Naive thymus-derived CD4-positive, alpha-beta T cell (primary cell): ENCODE measurements at regions of chr14 and their contacts with region 1.

Region 1: DNA sequence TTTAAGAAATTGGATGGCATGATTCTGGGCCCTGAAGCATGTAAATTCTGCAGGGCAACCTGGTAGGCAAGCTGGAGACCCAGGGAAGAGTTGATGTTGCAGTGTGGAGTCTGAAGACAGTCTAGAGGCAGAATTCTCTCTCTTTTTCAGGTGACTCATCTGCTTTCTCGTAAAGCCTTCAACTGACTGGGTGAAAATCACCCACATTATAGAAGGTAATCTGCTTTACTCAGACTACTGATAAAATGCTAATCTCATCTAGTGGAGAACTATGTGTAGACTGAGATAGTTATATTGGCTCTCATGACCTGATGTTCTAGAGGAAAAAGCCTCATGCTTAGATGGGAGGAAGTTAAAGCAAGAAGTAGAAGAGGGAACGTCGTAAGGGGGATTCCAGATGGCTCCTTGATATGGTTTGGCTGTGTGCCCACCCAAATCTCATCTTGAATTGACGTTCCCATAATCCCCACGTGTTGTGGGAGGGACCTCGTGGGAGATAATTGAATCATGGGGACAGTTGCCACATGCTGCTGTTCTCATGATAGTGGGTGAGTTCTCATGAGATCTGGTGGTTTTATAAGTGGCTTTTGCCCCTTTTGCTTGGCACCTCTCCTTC is 723.8 kb downstream of the BCL11B start:
- DNase-seq: peak in 2 of 9 donors; percentile 4
- ATAC-seq: peak; percentile 31
- H3K4me3 ChIP-seq: no peak overlapping the region
- H3K4me3 Mint-ChIP-seq: peak overlapping the region in 3 of 10 donors; percentile 24 to 42 (median 36)
- H3K27ac ChIP-seq: no peak overlapping the region
- H3K27ac Mint-ChIP-seq: peak overlapping the region in 7 of 9 donors; percentile 13 to 55 (median 29)
- H3K4me1 ChIP-seq: no peaks in the 10 kb centered on the region
- H3K4me1 Mint-ChIP-seq: peaks cover 9 to 33% (median 13%) of the 10 kb centered on the region in 7 donors
- H3K27me3 ChIP-seq: no peaks in the 10 kb centered on the region
- H3K27me3 Mint-ChIP-seq: no peaks in the 10 kb centered on the region

Region 2: GRCh38 chr14:98470663-98471062 is 77.5 kb before region 1 on chr14:
- CTCF ChIA-PET with region 1: no interaction called
- POLR2A ChIA-PET with region 1: no interaction called
- intact Hi-C with region 1: loop called in 1 of 2 experiments (anchors 5 kb)
- DNase-seq: no peak
- ATAC-seq: no peak
- H3K4me3 ChIP-seq: no peak overlapping the region
- H3K4me3 Mint-ChIP-seq: no peak overlapping the region
- H3K27ac ChIP-seq: no peak overlapping the region
- H3K27ac Mint-ChIP-seq: no peak overlapping the region
- H3K4me1 ChIP-seq: no peaks in the 10 kb centered on the region
- H3K4me1 Mint-ChIP-seq: peaks cover 0 to 6% (median 0%) of the 10 kb centered on the region in 7 donors
- H3K27me3 ChIP-seq: no peaks in the 10 kb centered on the region
- H3K27me3 Mint-ChIP-seq: no peaks in the 10 kb centered on the region

Region 3: DNA sequence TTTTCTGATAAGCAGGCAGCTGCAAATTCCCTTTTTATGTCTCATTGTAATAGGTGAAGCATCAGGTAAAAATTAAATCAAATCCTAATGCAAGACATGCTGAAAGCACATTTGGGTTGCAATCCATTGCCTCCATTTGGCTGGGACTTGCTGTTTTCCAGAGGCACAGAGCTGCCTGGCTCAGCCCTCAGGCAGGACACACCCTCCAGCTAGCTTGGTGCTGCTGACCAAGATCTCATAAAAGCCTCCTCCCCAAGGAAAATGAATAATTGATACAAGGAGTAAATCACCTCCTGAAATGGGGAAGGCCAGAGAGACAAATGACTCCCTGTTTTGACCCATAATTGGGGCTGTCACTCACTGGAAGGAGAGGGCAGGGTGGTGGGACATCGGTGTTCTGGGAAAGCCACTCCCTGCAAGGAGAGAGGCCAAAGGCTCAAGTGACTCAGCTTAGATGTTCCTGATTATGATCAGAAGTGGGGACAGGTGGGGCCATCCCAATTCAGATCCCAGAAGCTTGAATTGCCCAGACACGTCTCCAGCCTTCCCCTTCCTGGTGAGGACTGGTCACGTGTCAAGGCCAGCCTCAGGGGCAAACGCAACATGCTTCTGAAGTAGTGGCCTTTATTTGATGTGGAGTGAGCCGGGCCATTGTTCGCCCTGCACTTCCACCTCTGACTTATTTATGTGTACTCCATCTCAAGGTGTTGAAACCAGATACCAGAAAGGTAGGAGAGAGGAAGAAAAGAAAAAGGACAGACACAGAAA is 50.0 kb before region 1 on chr14:
- CTCF ChIA-PET with region 1: no interaction called
- POLR2A ChIA-PET with region 1: no interaction called
- intact Hi-C with region 1: no loop called
- DNase-seq: no peak
- ATAC-seq: no peak
- H3K4me3 ChIP-seq: no peak overlapping the region
- H3K4me3 Mint-ChIP-seq: no peak overlapping the region
- H3K27ac ChIP-seq: no peak overlapping the region
- H3K27ac Mint-ChIP-seq: peak overlapping the region in 3 of 9 donors; percentile 5 to 54 (median 33)
- H3K4me1 ChIP-seq: no peaks in the 10 kb centered on the region
- H3K4me1 Mint-ChIP-seq: peaks cover 0 to 31% (median 11%) of the 10 kb centered on the region in 7 donors
- H3K27me3 ChIP-seq: no peaks in the 10 kb centered on the region
- H3K27me3 Mint-ChIP-seq: no peaks in the 10 kb centered on the region

Region 4: DNA sequence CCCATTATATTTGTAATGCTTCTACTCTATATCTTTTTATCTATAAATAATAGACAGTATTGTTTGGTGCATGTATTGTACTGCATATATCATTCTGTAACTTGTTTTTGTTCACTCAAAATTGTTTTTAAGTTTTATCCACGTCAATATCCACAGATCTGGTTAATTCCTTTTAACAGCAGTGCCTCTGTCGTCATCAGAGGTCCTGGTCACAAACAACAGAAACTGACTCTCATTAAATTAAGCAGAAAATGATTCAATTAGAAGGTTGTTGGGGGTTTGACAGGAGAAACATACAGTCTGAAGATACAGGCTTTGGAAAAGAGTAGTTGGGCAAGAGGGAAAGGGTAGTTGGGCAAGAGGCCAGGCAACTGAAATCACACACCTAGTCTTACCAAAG is 122.4 kb after region 1 on chr14:
- CTCF ChIA-PET with region 1: no interaction called
- POLR2A ChIA-PET with region 1: no interaction called
- intact Hi-C with region 1: loop called in 1 of 2 experiments (anchors 10 kb)
- DNase-seq: no peak
- ATAC-seq: no peak
- H3K4me3 ChIP-seq: no peak overlapping the region
- H3K4me3 Mint-ChIP-seq: no peak overlapping the region
- H3K27ac ChIP-seq: no peak overlapping the region
- H3K27ac Mint-ChIP-seq: no peak overlapping the region
- H3K4me1 ChIP-seq: no peaks in the 10 kb centered on the region
- H3K4me1 Mint-ChIP-seq: peaks cover 0 to 1% (median 0%) of the 10 kb centered on the region in 7 donors
- H3K27me3 ChIP-seq: no peaks in the 10 kb centered on the region
- H3K27me3 Mint-ChIP-seq: peaks cover 0 to 36% (median 0%) of the 10 kb centered on the region in 5 donors